Astrocyte of the cerebellum (primary cell): ENCODE measurements at regions of chr1 and their contacts with region 1.

Region 1: GRCh38 chr1:223224465-223224864 is 81.4 kb upstream of the TLR5 start:
- DNase-seq: no peak
- H3K4me3 ChIP-seq: no peak overlapping the region
- CTCF ChIP-seq: no peak

Region 2: DNA sequence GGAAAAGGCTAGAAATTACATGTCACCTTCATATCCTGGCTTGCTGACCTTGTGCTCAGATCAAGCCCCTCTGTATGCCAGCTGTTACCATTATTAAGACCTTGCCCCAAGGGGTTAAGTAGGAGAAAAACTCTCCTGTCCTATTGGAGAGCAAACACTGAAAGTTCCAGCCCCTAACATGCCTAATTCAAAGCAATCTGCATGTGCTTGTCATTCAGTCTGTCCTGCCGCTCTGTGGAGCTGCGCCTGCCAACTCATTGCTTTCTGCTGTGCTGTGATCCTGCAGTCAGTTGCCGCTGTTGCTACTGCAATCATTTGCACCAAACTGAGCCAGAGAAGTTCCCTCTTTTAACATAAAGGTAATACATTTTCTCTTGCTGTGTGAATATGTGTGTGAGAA is 296.3 kb before region 1 on chr1:
- in situ Hi-C with region 1: no loop called
- DNase-seq: no peak
- H3K4me3 ChIP-seq: no peak overlapping the region
- CTCF ChIP-seq: no peak

Region 3: GRCh38 chr1:223175032-223175431 is 49.4 kb before region 1 on chr1:
- in situ Hi-C with region 1: loop called (anchors 5 kb)
- DNase-seq: no peak
- H3K4me3 ChIP-seq: no peak overlapping the region
- CTCF ChIP-seq: no peak

Region 4: GRCh38 chr1:223276029-223276428 is 51.6 kb after region 1 on chr1:
- in situ Hi-C with region 1: no loop called
- DNase-seq: no peak
- H3K4me3 ChIP-seq: no peak overlapping the region
- CTCF ChIP-seq: no peak

Region 5: DNA sequence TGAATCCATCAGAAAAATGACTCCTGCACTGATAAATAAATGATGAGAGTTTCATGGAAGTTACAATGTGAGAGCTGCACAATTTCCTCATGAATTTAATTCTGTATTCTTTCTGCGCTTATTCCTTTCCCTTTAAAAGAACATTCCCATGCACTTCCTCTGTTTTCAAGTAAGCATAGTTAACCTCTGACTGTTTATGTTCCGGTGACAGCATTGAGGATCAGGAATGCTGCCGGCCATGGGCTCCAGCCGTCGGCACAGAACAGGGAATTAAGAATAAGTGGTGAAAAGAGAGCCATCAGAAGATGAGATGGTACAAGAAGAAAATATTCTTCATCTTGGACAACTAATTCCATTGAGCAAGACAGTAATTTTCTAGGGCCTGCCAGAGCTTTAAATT is 74.2 kb after region 1 on chr1:
- in situ Hi-C with region 1: no loop called
- DNase-seq: no peak
- H3K4me3 ChIP-seq: no peak overlapping the region
- CTCF ChIP-seq: no peak